Heart right ventricle (tissue), 16 donors: ENCODE measurements at regions of chr14 and their contacts with region 1.

Region 1: DNA sequence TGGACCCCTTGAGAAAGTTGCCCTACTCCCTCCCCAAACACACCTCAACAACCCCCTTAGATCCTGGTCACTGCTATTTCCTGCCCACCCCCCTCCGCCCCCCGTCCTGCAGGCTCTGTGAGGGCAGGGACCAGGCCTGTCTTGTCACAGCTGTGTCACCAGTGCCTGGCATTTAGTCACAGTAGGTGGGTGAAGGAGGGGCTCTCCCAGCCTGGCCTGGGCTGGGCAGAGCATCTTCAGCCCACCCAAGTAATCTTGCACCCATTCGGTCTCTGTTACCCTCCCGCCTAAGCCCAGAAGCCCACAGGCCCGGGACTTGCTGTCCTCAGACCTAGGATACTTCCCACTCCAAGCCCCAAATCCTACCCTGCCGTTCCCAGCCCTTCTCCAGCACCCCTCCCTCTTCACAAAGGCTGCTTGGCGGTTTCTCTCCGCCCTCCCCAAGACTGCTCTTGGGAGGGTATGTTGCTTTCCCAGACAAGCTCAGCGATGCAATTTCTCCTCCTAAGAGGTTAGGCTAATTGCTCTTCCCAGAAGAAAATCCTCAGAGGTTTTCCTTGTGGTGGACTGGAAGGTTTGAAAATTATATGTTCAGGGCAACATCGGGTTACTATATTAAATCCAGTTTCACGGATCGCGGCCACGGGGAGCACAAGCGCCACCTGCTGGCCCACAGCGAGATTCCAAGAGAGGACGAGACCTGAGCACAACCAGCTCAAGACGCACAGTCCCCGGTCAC is 50.8 kb upstream of the ZFP36L1 start:
- DNase-seq: peak; percentile 76 to 84
- ATAC-seq: peak; percentile 79 to 91 (median 87)
- H3K4me3 ChIP-seq: peak overlapping the region in 9 of 10 donors; percentile 5 to 50 (median 38)
- H3K27ac ChIP-seq: peak overlapping the region in 2 of 10 donors; percentile 28 to 67
- H3K4me1 ChIP-seq: peaks cover 0 to 24% (median 3%) of the 10 kb centered on the region in 9 donors
- H3K27me3 ChIP-seq: no peaks in the 10 kb centered on the region
- CTCF ChIP-seq: peak; percentile 84 to 97 (median 94)

Region 2: GRCh38 chr14:67837011-67837624 is 1006.5 kb before region 1 on chr14:
- intact Hi-C with region 1: loop called in 1 of 10 experiments (anchors 5 kb)
- DNase-seq: peak in 1 of 2 donors; percentile 75
- ATAC-seq: peak in 1 of 8 donors; percentile 42
- H3K4me3 ChIP-seq: no peak overlapping the region
- H3K27ac ChIP-seq: no peak overlapping the region
- H3K4me1 ChIP-seq: no peaks in the 10 kb centered on the region
- H3K27me3 ChIP-seq: no peaks in the 10 kb centered on the region
- CTCF ChIP-seq: peak; percentile 4 to 67 (median 56)

Region 3: DNA sequence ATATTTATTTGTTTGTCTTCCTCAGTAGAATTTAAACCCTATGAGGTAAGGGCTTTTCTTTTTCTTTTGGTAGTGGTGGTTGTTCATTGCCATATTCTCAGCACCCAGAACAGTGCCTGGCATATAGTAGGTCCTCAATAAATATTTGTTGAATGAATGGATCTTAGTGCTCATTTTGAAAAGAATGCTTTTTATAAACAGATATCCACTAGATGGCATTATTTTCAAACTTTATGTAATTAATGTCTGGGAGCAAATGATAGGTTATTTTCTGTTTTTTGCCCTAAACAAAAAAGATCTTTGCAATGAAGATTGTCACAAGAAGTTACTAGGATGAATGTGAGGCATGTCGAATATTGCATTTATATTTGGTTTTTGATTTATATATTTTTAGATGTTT is 959.9 kb before region 1 on chr14:
- intact Hi-C with region 1: loop called in 2 of 10 experiments (anchors 5 kb)
- DNase-seq: no peak
- ATAC-seq: no peak
- H3K4me3 ChIP-seq: no peak overlapping the region
- H3K27ac ChIP-seq: peak overlapping the region in 2 of 10 donors; percentile 4 to 24
- H3K4me1 ChIP-seq: peaks cover 0 to 19% (median 7%) of the 10 kb centered on the region in 9 donors
- H3K27me3 ChIP-seq: no peaks in the 10 kb centered on the region
- CTCF ChIP-seq: peak in 7 of 9 donors; percentile 19 to 57 (median 45)

Region 4: GRCh38 chr14:67934008-67934481 is 909.6 kb before region 1 on chr14:
- intact Hi-C with region 1: loop called in 1 of 10 experiments (anchors 5 kb)
- DNase-seq: peak in 1 of 2 donors; percentile 26
- ATAC-seq: peak in 7 of 8 donors; percentile 87 to 94 (median 92)
- H3K4me3 ChIP-seq: no peak overlapping the region
- H3K27ac ChIP-seq: peak overlapping the region in 8 of 10 donors; percentile 9 to 62 (median 38)
- H3K4me1 ChIP-seq: peaks cover 3 to 24% (median 11%) of the 10 kb centered on the region in 9 donors
- H3K27me3 ChIP-seq: no peaks in the 10 kb centered on the region
- CTCF ChIP-seq: peak; percentile 40 to 79 (median 66)